ENCODE measurements at regions of chr14 and their contacts with region 1.

Region 1: GRCh38 chr14:44897045-44897844 is 64.5 kb downstream of the KLHL28 start:
- DNase-seq: peak; percentile 89 to 99 (median 98)
- H3K4me3 ChIP-seq: peak overlapping the region; percentile 59
- H3K4me3 Mint-ChIP-seq: peak overlapping the region; percentile 84 to 97 (median 94)
- H3K27ac ChIP-seq: peak overlapping the region; percentile 73
- H3K27ac Mint-ChIP-seq: peak overlapping the region; percentile 86 to 99 (median 98)
- H3K4me1 ChIP-seq: peaks cover 19% of the 10 kb centered on the region
- H3K4me1 Mint-ChIP-seq: peaks cover 20 to 46% (median 24%) of the 10 kb centered on the region in 3 donors
- H3K27me3 ChIP-seq: no peaks in the 10 kb centered on the region
- H3K27me3 Mint-ChIP-seq: no peaks in the 10 kb centered on the region

Region 2: DNA sequence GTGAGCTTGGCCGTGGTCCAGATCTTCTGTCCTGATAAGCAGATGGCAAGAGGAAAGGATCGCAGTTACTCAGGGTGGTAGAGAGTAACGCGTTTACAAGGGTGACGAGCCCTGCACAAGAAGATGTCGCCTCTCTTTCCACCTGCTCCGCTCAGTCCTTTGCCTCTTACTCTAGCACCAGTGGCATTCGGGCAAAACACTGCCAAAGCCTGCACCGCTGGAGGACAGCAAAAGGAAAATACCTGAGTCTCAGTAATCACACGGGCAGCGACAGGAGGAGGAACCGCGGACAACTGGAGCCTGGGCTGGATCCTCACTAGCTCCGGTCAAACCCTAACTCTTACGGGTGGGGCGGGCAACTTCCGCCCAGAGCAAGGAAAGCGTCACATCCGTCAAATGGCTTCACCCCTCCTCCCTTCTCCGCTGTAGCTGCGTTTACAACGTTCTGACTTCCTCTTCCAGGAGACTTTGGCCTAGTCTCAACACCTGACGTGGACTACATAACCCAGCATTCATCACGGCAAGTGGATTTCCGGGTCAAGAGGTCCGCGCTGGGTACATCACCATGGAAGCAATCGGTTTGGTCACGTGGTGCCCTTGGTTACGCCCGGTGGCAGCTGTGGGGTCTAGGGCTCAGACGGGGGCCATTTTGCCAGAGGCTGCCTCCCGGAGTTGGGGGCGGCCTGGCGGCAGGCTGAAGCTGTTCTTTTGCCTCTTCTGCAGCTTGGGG is 64.5 kb after region 1 on chr14 and contains the starts of genes KLHL28 and TOGARAM1:
- CTCF ChIA-PET with region 1: interaction called, 6 read pairs
- POLR2A ChIA-PET with region 1: interaction called, 31 read pairs
- DNase-seq: peak; percentile 91 to 99 (median 97)
- H3K4me3 ChIP-seq: peak within 1 kb of the TSS; percentile 90
- H3K4me3 Mint-ChIP-seq: no peak within 1 kb of the TSS
- H3K27ac ChIP-seq: peak within 1 kb of the TSS; percentile 97
- H3K27ac Mint-ChIP-seq: peak within 1 kb of the TSS in 1 of 8 donors; percentile 32
- H3K4me1 ChIP-seq: peaks cover 64% of the 10 kb centered on the region
- H3K4me1 Mint-ChIP-seq: peaks cover 5 to 72% (median 60%) of the 10 kb centered on the region in 3 donors
- H3K27me3 ChIP-seq: no peaks in the 10 kb centered on the region
- H3K27me3 Mint-ChIP-seq: no peaks in the 10 kb centered on the region
- total RNA-seq, gene KLHL28: 12.3 to 13.4 TPM
- total RNA-seq, gene TOGARAM1: 7.2 to 7.5 TPM

Measured in CD8-positive, alpha-beta memory T cell (primary cell).